ENCODE measurements at regions of chr1 and their contacts with region 1.

Region 1: GRCh38 chr1:172745014-172745413 is 86.1 kb downstream of the FASLG start:
- DNase-seq: peak; percentile 72
- H3K4me3 ChIP-seq: no peak overlapping the region
- H3K27ac ChIP-seq: no peak overlapping the region
- H3K27me3 ChIP-seq: peaks cover 2% of the 10 kb centered on the region
- CTCF ChIP-seq: peak; percentile 79

Region 2: GRCh38 chr1:172589553-172589952 is 155.5 kb before region 1 on chr1:
- CTCF ChIA-PET with region 1: no interaction called
- POLR2A ChIA-PET with region 1: no interaction called
- DNase-seq: no peak
- H3K4me3 ChIP-seq: no peak overlapping the region
- H3K27ac ChIP-seq: no peak overlapping the region
- H3K27me3 ChIP-seq: no peaks in the 10 kb centered on the region
- CTCF ChIP-seq: no peak

Region 3: DNA sequence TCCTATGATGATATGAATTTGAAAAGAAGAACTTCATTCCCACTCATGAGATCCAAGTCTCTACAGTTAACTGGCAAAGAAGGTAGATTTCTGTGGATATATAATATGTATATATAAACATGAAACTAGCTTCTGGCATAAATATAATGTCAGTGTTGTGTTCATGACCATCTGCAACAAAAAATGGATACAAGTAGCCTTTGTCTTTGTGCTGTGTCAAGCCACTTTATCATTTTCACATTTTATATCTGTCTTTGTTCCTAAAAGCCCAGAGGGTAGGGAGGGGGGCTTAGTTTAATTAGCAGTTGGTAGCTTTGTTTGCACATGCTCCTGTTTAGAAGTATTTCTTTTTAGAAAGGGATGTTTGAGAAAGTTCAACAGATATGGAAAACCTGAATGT is 142.3 kb before region 1 on chr1:
- CTCF ChIA-PET with region 1: no interaction called
- POLR2A ChIA-PET with region 1: no interaction called
- DNase-seq: no peak
- H3K4me3 ChIP-seq: no peak overlapping the region
- H3K27ac ChIP-seq: no peak overlapping the region
- H3K27me3 ChIP-seq: no peaks in the 10 kb centered on the region
- CTCF ChIP-seq: no peak

Region 4: DNA sequence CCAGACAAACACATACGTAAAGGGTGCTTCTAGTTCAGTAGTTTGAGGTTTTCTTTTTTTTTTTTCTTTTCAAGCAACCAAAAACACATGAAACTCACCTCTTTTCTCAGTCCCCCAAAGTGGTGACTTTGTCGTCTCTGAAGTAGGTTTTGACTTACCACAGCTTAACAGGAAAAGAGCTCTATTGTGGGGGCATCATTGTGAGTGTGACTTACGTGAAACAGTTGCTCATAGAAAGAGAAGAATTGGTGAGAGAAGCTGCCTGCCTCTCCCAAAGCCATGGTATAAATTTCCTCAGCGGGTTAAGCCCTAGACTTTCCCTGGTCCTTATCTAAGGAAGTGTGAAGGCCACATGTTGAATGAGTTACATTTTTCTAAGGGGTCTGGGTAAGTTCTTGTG is 74.2 kb before region 1 on chr1:
- CTCF ChIA-PET with region 1: no interaction called
- POLR2A ChIA-PET with region 1: no interaction called
- DNase-seq: no peak
- H3K4me3 ChIP-seq: no peak overlapping the region
- H3K27ac ChIP-seq: no peak overlapping the region
- H3K27me3 ChIP-seq: no peaks in the 10 kb centered on the region
- CTCF ChIP-seq: no peak

Region 5: DNA sequence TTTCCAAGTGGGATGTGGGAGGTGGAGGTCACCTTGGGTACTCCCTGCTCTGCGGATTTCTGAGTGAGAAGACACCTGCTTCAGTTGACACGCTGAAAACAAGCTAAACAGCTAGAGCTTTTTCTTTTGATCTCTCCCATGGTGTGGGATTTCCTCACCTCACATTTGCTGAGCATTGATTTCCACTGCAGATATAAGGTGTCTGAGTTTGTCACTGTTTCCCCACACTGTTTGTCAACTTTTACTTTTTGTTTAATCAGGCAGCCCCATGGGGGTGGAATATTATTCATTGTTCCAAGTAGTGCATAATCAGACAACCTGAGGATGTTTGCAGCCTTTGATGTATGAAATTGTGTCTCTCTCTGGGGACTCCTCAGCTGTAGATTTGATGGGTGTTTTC is 36.6 kb before region 1 on chr1:
- CTCF ChIA-PET with region 1: no interaction called
- POLR2A ChIA-PET with region 1: no interaction called
- DNase-seq: no peak
- H3K4me3 ChIP-seq: no peak overlapping the region
- H3K27ac ChIP-seq: no peak overlapping the region
- H3K27me3 ChIP-seq: no peaks in the 10 kb centered on the region
- CTCF ChIP-seq: no peak

Region 6: GRCh38 chr1:172818841-172819527 is 74.0 kb after region 1 on chr1:
- CTCF ChIA-PET with region 1: interaction called, 11 read pairs
- POLR2A ChIA-PET with region 1: interaction called, 3 read pairs
- DNase-seq: no peak
- H3K4me3 ChIP-seq: no peak overlapping the region
- H3K27ac ChIP-seq: no peak overlapping the region
- H3K27me3 ChIP-seq: no peaks in the 10 kb centered on the region
- CTCF ChIP-seq: no peak

Region 7: DNA sequence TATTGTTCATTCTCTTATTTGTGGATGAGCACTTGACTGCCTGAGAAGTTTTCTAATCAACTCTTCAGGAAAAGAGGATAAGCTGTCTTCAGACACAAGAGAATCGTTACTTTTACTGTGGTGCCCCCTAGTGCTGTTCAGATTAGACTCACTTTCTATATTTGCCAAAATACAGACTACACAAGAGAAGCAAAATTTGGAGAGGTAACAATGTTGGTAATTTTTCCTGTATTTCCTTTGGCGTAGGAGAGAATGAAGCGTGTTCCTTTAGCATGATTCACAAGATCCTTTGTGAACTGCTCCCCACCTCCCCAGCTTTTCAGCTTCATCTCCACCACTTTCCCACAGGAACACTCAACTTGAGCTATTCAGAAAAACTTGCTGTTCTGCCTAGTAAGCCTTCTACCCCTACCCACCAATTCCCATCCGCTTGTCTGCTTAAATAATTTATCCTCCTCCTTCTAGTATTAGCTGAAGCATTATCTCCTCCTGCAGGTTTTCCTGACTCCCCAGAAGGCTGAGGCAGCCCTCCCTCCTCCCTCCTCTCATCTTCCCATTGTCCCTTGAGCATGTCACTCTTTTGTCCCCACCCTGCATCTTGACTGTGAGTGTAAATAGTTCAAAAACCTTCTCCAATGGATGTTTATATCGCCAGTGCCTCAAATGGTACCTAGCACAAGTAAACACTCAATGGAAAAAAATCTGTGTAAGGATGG is 457.6 kb after region 1 on chr1:
- CTCF ChIA-PET with region 1: interaction called, 205 read pairs
- POLR2A ChIA-PET with region 1: interaction called, 4 read pairs
- DNase-seq: peak; percentile 74
- H3K4me3 ChIP-seq: peak overlapping the region; percentile 35
- H3K27ac ChIP-seq: peak overlapping the region; percentile 59
- H3K27me3 ChIP-seq: no peaks in the 10 kb centered on the region
- CTCF ChIP-seq: peak; percentile 76

Region 8: GRCh38 chr1:173420330-173420806 is 675.4 kb after region 1 on chr1:
- CTCF ChIA-PET with region 1: interaction called, 19 read pairs
- POLR2A ChIA-PET with region 1: no interaction called
- DNase-seq: peak; percentile 60
- H3K4me3 ChIP-seq: peak overlapping the region; percentile 18; the same call in 1 of the 2 replicates
- H3K27ac ChIP-seq: no peak overlapping the region
- H3K27me3 ChIP-seq: no peaks in the 10 kb centered on the region
- CTCF ChIP-seq: peak; percentile 76

Region 9: GRCh38 chr1:173476664-173477285 is 731.8 kb after region 1 on chr1:
- CTCF ChIA-PET with region 1: interaction called, 14 read pairs
- POLR2A ChIA-PET with region 1: no interaction called
- DNase-seq: no peak
- H3K4me3 ChIP-seq: peak overlapping the region; percentile 83
- H3K27ac ChIP-seq: peak overlapping the region; percentile 55
- H3K27me3 ChIP-seq: no peaks in the 10 kb centered on the region
- CTCF ChIP-seq: no peak